ENCODE measurements at regions of chr1 and their contacts with region 1.

Region 1: GRCh38 chr1:27489910-27490741 is at the start of gene WASF2:
- DNase-seq: peak; percentile 97
- H3K4me3 ChIP-seq: peak within 1 kb of the TSS; percentile 99
- H3K27ac ChIP-seq: peak within 1 kb of the TSS; percentile 100
- H3K4me1 ChIP-seq: peaks cover 9% of the 10 kb centered on the region
- H3K27me3 ChIP-seq: no peaks in the 10 kb centered on the region
- CTCF ChIP-seq: peak in 1 of 4 experiments; percentile 35
- POLR2A ChIP-seq: peak; percentile 100
- total RNA-seq, gene WASF2: 42.0 to 63.6 TPM

Region 2: DNA sequence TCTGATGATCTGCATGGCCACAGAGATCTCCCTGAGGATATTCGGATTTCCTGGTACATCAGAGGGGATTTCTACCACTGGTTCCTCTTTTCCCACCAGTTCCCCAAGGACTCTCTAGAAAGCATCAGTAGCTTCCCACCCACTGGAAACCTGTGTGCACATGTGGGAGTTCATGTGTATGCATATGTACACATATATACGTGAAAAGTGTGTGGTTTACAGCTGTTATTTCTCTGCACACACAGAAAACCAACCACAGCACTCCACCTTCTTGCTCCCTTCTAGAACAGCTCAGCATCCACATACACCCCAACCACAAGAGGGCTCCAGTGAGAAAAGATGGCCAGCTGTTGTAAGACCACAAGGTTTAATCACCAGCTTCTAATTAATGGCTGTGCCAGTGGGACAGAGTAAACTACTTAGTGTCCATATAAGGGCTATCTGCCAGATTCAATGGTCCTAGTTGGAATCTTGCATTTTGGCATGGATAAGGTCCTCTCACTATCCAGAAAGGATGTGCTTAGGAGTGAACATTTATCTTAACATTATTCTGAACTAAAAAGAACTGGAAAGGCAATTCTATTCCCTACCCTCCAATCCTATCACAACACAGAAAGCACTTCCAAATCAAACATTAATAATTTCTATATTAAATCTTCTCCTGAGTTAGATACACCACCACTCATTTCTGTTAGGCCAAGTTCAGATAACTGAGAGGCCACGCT is 73.6 kb before region 1 on chr1:
- intact Hi-C with region 1: loop called (anchors 5 kb)
- DNase-seq: no peak
- H3K4me3 ChIP-seq: no peak overlapping the region
- H3K27ac ChIP-seq: peak overlapping the region; percentile 64 to 68
- H3K4me1 ChIP-seq: peaks cover 11% of the 10 kb centered on the region
- H3K27me3 ChIP-seq: no peaks in the 10 kb centered on the region
- CTCF ChIP-seq: peak in 3 of 4 experiments; percentile 41 to 68 (median 63)
- POLR2A ChIP-seq: no peak

Region 3: DNA sequence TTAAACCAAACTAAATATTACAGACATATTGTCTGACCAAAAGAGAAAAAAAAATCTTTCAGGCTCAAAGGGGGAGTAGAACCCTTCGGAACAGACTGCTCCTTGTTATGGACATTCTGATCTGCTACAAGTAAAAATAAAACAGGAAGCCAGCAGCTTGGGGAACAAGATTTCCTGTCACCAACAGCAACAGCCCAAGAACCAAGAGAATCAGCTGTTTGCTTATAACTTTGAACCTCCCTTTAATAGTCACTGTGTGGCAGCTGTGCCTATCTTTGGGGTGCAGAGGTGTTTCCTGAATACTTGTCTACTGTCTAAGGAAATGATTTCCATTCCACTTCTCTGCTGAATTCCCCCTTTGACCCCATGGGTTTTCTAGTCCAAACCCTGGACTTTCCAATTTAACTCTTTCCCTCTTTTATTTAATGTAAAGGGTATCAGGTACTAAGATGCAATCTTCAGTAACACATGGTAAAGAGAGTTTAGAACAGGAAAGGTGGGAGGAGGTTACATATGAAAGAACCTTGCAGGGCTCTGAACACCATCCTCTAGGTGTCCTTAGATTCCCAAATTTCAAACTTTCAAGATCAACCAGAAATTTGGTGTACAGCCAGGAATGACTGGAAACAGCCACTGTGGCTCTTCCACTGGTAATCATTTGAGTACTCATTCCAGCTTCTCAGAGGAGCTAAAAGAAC is 59.1 kb before region 1 on chr1:
- intact Hi-C with region 1: loop called (anchors 2 kb)
- DNase-seq: peak; percentile 23
- H3K4me3 ChIP-seq: no peak overlapping the region
- H3K27ac ChIP-seq: peak overlapping the region; percentile 48 to 56
- H3K4me1 ChIP-seq: peaks cover 14% of the 10 kb centered on the region
- H3K27me3 ChIP-seq: no peaks in the 10 kb centered on the region
- CTCF ChIP-seq: no peak
- POLR2A ChIP-seq: no peak

Region 4: GRCh38 chr1:27525296-27526272 is 35.5 kb after region 1 on chr1:
- intact Hi-C with region 1: loop called (anchors 5 kb)
- DNase-seq: no peak
- H3K4me3 ChIP-seq: peak overlapping the region in 1 of 2 donors; percentile 6
- H3K27ac ChIP-seq: peak overlapping the region; percentile 87 to 95
- H3K4me1 ChIP-seq: peaks cover 53% of the 10 kb centered on the region
- H3K27me3 ChIP-seq: no peaks in the 10 kb centered on the region
- CTCF ChIP-seq: no peak
- POLR2A ChIP-seq: no peak